Panc1 (cell line): ENCODE measurements at regions of chr1 and their contacts with region 1.

Region 1: DNA sequence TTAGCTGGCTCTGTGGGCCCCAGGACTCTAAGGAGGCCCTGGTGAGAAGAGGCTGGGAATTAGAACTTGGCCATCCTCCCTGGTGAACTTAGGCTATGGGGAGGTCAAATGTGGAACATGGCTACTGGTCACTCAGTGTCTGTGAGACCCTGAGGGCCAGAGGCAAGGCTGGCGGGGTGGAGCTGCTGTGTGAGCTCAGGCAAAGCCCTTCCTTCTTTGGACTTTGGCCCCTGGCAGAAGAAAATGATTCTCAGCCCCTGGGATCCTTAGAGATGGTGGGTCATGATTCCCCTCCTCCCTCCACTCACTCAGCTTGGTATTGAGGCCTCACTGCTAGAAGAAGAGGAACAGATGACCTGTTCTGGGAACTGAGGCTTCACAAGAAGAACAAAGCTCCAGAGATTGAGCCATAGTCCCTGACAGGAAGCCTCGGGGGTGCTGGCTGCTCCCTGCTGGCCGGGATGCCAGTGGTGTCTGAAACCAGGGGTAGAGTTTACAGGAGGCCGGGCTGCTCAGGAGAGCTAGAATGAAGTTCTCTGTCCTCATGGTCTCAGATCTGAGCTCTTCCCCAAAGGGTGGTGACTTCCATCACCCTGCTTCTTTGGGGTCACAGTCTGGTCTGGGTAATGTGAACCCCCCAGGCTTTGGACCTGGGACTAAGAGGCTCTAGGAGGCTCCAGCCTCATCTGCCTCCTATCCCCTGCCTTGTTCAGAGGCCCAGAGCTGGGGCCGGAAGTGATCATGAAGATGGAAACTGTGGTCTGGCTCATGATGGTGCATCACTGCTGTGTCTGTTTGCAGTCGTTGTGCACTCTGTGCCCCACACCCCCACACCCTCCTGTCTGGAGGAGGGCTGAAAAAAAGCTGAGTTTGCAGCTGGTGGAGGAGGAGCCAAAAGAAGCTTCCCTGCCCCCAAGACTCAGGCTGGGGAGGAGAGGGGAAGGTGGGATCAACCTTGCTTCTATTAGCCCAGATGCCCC is 905 bp downstream of the BTBD19 start:
- DNase-seq: no peak
- ATAC-seq: no peak
- H3K4me3 ChIP-seq: no peak overlapping the region; a peak in 1 of 4 replicates
- H3K27ac ChIP-seq: peak overlapping the region; percentile 94
- H3K4me1 ChIP-seq: peaks cover 47% of the 10 kb centered on the region
- H3K27me3 ChIP-seq: no peaks in the 10 kb centered on the region
- CTCF ChIP-seq: no peak

Region 2: DNA sequence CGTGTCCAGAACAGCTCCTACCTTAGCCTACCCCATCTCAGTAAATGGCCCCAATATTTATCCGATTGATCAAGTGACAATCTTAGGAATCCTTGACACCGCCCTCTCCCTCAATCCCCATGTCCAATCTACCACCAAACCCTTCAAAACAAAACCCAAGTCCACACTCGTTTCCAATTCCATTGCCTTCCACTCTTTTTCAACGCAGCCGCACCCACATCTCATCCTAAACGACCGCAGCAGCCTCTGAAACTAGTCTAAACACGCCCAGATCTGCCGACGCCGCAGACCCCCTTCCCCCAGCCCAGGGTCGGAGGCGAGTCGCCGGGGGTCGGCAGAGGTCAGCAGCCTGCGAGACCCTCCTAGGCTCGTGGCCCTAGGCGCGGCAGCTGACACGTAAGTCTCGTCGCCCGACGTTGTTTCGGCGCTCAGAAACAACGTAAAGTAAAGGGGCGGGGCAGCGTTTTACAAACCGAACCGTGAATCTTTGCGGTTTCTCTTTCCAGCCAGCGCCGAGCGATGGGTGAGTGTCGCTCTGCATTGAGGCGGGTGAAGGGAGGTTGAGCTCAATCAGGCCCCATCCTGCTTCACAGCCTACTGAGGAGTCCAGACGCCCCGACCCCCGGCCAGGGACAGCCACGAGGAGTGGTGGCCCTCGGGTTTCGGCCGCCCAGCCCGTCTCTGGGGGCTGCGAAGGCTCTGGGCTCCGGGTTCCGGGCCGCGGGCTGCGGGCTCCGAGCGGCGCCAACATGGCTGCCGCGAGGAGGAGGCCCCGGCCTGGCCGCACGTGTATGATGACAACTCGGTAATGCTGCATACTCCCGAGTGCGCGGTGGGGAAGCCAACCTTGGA is 33.9 kb before region 1 on chr1 and contains the start of gene RPS8:
- CTCF ChIA-PET with region 1: no interaction called
- POLR2A ChIA-PET with region 1: interaction called, 16 read pairs
- in situ Hi-C with region 1: no loop called
- intact Hi-C with region 1: no loop called
- DNase-seq: peak; percentile 83
- ATAC-seq: peak; percentile 93
- H3K4me3 ChIP-seq: peak within 1 kb of the TSS; percentile 84 to 91
- H3K27ac ChIP-seq: peak within 1 kb of the TSS; percentile 92
- H3K4me1 ChIP-seq: peaks cover 10% of the 10 kb centered on the region
- H3K27me3 ChIP-seq: no peaks in the 10 kb centered on the region
- CTCF ChIP-seq: no peak
- total RNA-seq, gene RPS8: 1,087 TPM

Region 3: GRCh38 chr1:46152016-46152415 is 1342.8 kb after region 1 on chr1:
- CTCF ChIA-PET with region 1: no interaction called
- POLR2A ChIA-PET with region 1: interaction called, 12 read pairs
- in situ Hi-C with region 1: no loop called
- intact Hi-C with region 1: no loop called
- DNase-seq: no peak
- ATAC-seq: no peak
- H3K4me3 ChIP-seq: no peak overlapping the region
- H3K27ac ChIP-seq: no peak overlapping the region
- H3K4me1 ChIP-seq: no peaks in the 10 kb centered on the region
- H3K27me3 ChIP-seq: no peaks in the 10 kb centered on the region
- CTCF ChIP-seq: no peak